ENCODE measurements at regions of chr1 and their contacts with region 1.

Region 1: DNA sequence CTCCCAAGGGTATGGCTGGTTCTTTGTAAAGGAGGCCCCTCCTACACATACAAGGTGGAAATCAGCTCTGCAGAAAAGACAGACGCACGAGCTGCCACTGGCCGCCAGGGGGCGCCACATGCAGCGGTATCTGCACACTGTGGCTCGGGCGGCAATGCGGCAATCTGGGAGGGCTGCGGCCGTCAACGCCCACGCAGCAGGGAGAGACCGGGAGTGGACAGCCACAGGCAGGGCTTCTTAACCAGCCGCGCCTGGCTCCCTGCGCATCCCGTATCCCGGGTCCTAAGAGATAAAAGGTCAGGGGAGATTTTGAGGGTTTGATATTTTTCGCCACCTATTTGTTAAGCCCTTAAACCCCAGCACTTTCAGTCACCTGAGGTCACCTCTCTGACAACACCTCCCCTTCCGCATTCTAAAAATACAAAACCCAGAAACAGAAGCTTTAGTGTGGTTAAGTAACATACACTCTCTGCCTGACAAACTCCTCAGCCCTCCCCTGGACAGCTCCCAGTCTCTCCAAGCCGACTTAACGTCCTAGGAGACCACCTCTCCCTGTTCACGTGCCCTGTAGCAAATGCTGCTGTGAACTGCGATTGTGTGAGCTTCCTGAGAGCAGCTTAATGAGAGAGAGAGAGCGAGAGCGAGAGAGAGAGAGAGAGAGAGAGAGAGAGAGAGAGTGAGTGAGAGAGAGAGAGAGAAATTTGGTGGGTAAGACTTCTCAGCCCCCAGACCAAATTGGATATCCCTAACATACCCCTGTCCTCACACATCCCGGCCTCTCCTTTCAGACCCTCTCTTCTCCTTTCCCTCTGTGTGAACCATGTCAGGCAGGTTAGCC is 13.5 kb upstream of the KCNA2 start:
- DNase-seq: peak; percentile 84 to 96 (median 92)
- ATAC-seq: peak; percentile 95
- H3K4me3 ChIP-seq: peak overlapping the region; percentile 58
- H3K4me3 Mint-ChIP-seq: peak overlapping the region; percentile 81 to 96 (median 90)
- H3K27ac ChIP-seq: peak overlapping the region; percentile 54
- H3K27ac Mint-ChIP-seq: peak overlapping the region; percentile 89 to 95 (median 93)
- H3K4me1 ChIP-seq: peaks cover 16 to 30% of the 10 kb centered on the region in 2 donors
- H3K4me1 Mint-ChIP-seq: peaks cover 32 to 54% (median 42%) of the 10 kb centered on the region in 7 donors
- H3K27me3 ChIP-seq: no peaks in the 10 kb centered on the region
- H3K27me3 Mint-ChIP-seq: peaks cover 0 to 4% (median 0%) of the 10 kb centered on the region in 5 donors

Region 2: DNA sequence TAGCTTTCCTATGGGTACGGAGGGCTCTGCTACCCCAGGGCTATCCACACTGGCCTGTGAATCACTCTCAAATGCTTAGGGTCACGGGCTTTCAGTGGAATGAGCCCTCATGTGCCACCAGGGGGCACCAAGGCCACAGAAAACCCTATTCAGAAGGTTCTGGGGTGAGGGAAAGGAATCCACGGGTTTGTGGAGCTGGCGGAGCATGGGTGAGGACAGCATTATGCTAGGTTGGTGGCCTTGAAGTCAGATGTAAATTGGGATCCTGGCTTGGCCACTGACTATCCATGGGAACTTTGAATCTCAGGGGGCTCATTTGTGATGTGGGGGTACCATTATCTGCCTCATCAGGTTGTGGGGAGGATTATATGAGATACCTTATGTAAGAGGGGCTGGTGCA is 207.1 kb before region 1 on chr1:
- CTCF ChIA-PET with region 1: interaction called, 9 read pairs
- POLR2A ChIA-PET with region 1: no interaction called
- intact Hi-C with region 1: loop called (anchors 1 to 10 kb)
- DNase-seq: peak; percentile 22 to 59 (median 51)
- ATAC-seq: peak; percentile 71
- H3K4me3 ChIP-seq: no peak overlapping the region
- H3K4me3 Mint-ChIP-seq: no peak overlapping the region
- H3K27ac ChIP-seq: no peak overlapping the region
- H3K27ac Mint-ChIP-seq: peak overlapping the region in 2 of 9 donors; percentile 15 to 77
- H3K4me1 ChIP-seq: peaks cover 7 to 13% of the 10 kb centered on the region in 2 donors
- H3K4me1 Mint-ChIP-seq: peaks cover 9 to 22% (median 18%) of the 10 kb centered on the region in 7 donors
- H3K27me3 ChIP-seq: no peaks in the 10 kb centered on the region
- H3K27me3 Mint-ChIP-seq: no peaks in the 10 kb centered on the region

Region 3: GRCh38 chr1:110605901-110606656 is 13.6 kb before region 1 on chr1 and contains the start of gene KCNA2:
- CTCF ChIA-PET with region 1: interaction called, 10 read pairs
- POLR2A ChIA-PET with region 1: interaction called, 13 read pairs
- intact Hi-C with region 1: no loop called
- DNase-seq: peak in 4 of 9 donors; percentile 7 to 28 (median 14)
- ATAC-seq: peak; percentile 23
- H3K4me3 ChIP-seq: peak within 1 kb of the TSS; percentile 68
- H3K4me3 Mint-ChIP-seq: peak within 1 kb of the TSS; percentile 80 to 91 (median 87)
- H3K27ac ChIP-seq: no peak within 1 kb of the TSS
- H3K27ac Mint-ChIP-seq: no peak within 1 kb of the TSS
- H3K4me1 ChIP-seq: peaks cover 0 to 5% of the 10 kb centered on the region in 2 donors
- H3K4me1 Mint-ChIP-seq: peaks cover 0 to 39% (median 15%) of the 10 kb centered on the region in 7 donors
- H3K27me3 ChIP-seq: peaks cover 8 to 10% of the 10 kb centered on the region in 2 donors
- H3K27me3 Mint-ChIP-seq: peaks cover 46 to 61% (median 57%) of the 10 kb centered on the region in 5 donors
- total RNA-seq, gene KCNA2: 0.62 to 4.6 (median 1.2) TPM

Region 4: GRCh38 chr1:110645821-110646735 is 26.4 kb after region 1 on chr1:
- CTCF ChIA-PET with region 1: interaction called, 5 read pairs
- POLR2A ChIA-PET with region 1: interaction called, 10 read pairs
- intact Hi-C with region 1: no loop called
- DNase-seq: no peak
- ATAC-seq: peak; percentile 60
- H3K4me3 ChIP-seq: peak overlapping the region; percentile 5
- H3K4me3 Mint-ChIP-seq: peak overlapping the region in 6 of 10 donors; percentile 22 to 55 (median 37)
- H3K27ac ChIP-seq: peak overlapping the region; percentile 48
- H3K27ac Mint-ChIP-seq: peak overlapping the region in 2 of 9 donors; percentile 75 to 87
- H3K4me1 ChIP-seq: peaks cover 83 to 92% of the 10 kb centered on the region in 2 donors
- H3K4me1 Mint-ChIP-seq: peaks cover 14 to 48% (median 42%) of the 10 kb centered on the region in 7 donors
- H3K27me3 ChIP-seq: no peaks in the 10 kb centered on the region
- H3K27me3 Mint-ChIP-seq: no peaks in the 10 kb centered on the region

Region 5: GRCh38 chr1:110780600-110781484 is 161.2 kb after region 1 on chr1:
- CTCF ChIA-PET with region 1: interaction called, 104 read pairs
- POLR2A ChIA-PET with region 1: interaction called, 11 read pairs
- intact Hi-C with region 1: loop called (anchors 1 kb)
- DNase-seq: peak; percentile 48 to 83 (median 74)
- ATAC-seq: peak; percentile 88
- H3K4me3 ChIP-seq: no peak overlapping the region
- H3K4me3 Mint-ChIP-seq: peak overlapping the region in 5 of 10 donors; percentile 29 to 61 (median 42)
- H3K27ac ChIP-seq: no peak overlapping the region
- H3K27ac Mint-ChIP-seq: peak overlapping the region in 5 of 9 donors; percentile 2 to 82 (median 34)
- H3K4me1 ChIP-seq: peaks cover 31 to 40% of the 10 kb centered on the region in 2 donors
- H3K4me1 Mint-ChIP-seq: peaks cover 18 to 54% (median 45%) of the 10 kb centered on the region in 7 donors
- H3K27me3 ChIP-seq: no peaks in the 10 kb centered on the region
- H3K27me3 Mint-ChIP-seq: peaks cover 0 to 28% (median 0%) of the 10 kb centered on the region in 5 donors

Region 6: GRCh38 chr1:111334169-111334568 is 714.5 kb after region 1 on chr1:
- CTCF ChIA-PET with region 1: no interaction called
- POLR2A ChIA-PET with region 1: no interaction called
- intact Hi-C with region 1: loop called in 1 of 2 experiments (anchors 5 kb)
- DNase-seq: peak in 7 of 9 donors; percentile 60 to 78 (median 66)
- ATAC-seq: peak; percentile 83
- H3K4me3 ChIP-seq: no peak overlapping the region
- H3K4me3 Mint-ChIP-seq: no peak overlapping the region
- H3K27ac ChIP-seq: no peak overlapping the region
- H3K27ac Mint-ChIP-seq: peak overlapping the region in 1 of 9 donors; percentile 29
- H3K4me1 ChIP-seq: peaks cover 0 to 7% of the 10 kb centered on the region in 2 donors
- H3K4me1 Mint-ChIP-seq: peaks cover 3 to 14% (median 6%) of the 10 kb centered on the region in 7 donors
- H3K27me3 ChIP-seq: no peaks in the 10 kb centered on the region
- H3K27me3 Mint-ChIP-seq: peaks cover 0 to 2% (median 0%) of the 10 kb centered on the region in 5 donors